ENCODE measurements at regions of chr7 and their contacts with region 1.

Region 1: DNA sequence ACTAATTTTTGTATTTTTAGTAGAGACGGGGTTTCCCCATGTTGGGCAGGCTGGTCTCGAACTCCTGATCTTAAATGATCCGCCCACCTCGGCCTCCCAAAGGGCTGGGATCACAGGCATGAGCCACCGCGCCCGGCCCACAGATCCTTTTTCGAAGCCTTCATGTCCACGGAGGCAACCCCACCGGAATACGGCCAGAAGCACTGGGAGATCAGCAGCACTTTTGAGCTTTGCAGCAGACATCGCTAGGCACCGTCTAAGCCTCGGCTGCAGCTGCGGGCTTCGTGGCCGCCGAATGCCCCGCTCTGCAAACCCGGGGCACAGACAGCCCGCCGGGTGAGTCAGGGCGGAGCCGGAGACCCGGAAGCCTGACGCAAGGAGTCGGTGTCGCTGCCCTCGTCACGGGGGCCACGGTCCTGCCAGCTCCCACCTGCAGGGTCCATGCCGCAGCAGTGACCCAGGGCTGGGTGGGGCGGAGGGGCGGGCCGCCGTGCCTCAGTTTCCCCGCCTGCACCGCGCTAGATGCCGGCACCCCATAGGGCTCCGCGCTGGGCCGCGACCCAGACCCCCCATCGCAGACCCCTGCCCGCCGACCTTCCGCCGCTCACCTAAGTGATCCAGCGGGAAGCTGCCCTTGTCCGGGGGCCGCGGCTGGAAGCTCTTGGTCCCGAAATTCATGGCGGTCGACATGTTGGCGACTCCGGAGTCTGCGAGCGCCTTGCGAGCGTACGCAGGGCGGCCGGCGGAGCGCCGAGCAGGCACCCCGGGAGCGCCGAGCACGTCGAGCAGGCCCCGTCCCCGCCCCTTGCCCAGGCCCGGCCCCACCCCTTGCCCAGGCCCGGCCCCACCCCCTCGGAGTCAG is at the start of gene COX19:
- DNase-seq: peak; percentile 85
- H3K4me3 Mint-ChIP-seq: peak within 1 kb of the TSS; percentile 92
- H3K27ac Mint-ChIP-seq: peak within 1 kb of the TSS; percentile 93
- H3K4me1 Mint-ChIP-seq: peaks cover 12% of the 10 kb centered on the region
- H3K27me3 Mint-ChIP-seq: no peaks in the 10 kb centered on the region
- total RNA-seq, gene COX19: 15.0 and 17.2 TPM in 2 replicates

Region 2: DNA sequence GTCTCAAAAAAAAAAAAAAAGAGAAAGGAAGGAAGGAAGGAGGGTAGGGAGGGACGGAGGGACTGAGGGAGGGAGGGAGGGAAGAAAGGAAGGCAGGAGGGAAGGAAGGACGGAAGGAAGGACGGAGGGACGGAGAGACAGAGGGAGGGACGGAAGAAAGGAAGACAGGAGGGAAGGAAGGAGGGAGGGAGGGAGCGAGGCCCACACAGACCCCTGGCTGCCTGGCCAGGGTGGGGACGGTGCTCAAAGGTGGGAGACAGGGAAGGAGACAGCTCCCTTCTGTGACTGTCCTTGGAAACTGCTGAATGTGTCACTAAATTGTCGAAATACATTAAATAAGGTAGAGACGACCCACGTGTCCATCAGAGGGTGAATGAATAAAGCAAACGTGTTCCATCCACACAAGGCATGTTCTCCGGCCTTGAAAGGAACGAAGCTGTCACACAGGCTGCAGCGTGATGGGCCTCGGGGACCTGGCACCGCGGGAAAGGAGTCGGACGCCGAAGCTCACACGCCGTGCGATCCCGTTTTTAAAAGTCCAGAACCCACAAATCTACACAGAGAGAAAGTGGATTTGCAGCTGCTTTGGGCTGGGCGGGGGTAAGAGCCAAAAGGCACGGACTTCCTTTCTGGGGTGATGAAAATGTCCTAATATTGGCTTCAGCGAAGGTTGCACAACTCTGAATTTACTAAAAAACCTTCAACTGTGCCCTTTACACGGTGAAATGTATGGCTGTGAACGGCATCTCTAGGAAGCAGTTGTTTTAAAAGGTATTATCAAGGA is 43.9 kb before region 1 on chr7:
- intact Hi-C with region 1: loop called (anchors 2 kb)
- DNase-seq: no peak
- H3K4me3 Mint-ChIP-seq: no peak overlapping the region
- H3K27ac Mint-ChIP-seq: peak overlapping the region; percentile 12
- H3K4me1 Mint-ChIP-seq: peaks cover 16% of the 10 kb centered on the region
- H3K27me3 Mint-ChIP-seq: no peaks in the 10 kb centered on the region

Region 3: GRCh38 chr7:1028031-1028770 is 53.1 kb after region 1 on chr7:
- intact Hi-C with region 1: loop called (anchors 1 kb)
- DNase-seq: peak; percentile 80
- H3K4me3 Mint-ChIP-seq: peak overlapping the region; percentile 79
- H3K27ac Mint-ChIP-seq: peak overlapping the region; percentile 89
- H3K4me1 Mint-ChIP-seq: peaks cover 25% of the 10 kb centered on the region
- H3K27me3 Mint-ChIP-seq: no peaks in the 10 kb centered on the region

Measured in activated T-helper 2 cell treated with anti-CD3 and anti-CD28 coated beads, Interferon-gamma antibody, Interleukin-2, Interleukin-4, amounts not matched to agents 10 μg/mL and 5 μg/mL and 100 μg/mL, durations not matched to agents 14 hours and 24 hours and 36 hours (primary cell).